ENCODE measurements at regions of chr1 and their contacts with region 1.

Region 1: DNA sequence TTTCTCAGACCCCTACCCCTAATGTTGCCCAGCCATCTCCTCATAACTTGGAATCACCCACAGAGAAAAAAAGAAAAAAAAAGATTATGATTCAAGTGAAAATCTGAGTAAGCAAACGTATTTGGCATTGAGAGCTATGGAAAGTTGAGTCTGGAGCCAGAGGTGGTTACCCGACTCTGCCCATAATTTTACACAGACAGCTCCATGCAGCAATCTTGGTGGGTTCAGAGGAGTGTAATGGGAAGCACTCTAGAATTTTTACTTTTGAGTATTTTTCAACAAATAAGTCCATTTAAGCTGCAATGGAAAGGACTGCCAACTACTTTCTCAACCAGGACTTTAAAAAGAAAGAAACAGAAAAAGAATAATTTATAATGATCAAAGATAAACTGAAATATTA is 62.7 kb downstream of the ZC3H11B start:
- DNase-seq: no peak
- ATAC-seq: no peak
- H3K4me3 ChIP-seq: no peak overlapping the region
- H3K27ac ChIP-seq: no peak overlapping the region
- H3K4me1 ChIP-seq: no peaks in the 10 kb centered on the region
- H3K27me3 ChIP-seq: no peaks in the 10 kb centered on the region; a peak in 1 of 5 replicates
- CTCF ChIP-seq: no peak
- EP300 ChIP-seq: no peak
- POLR2A ChIP-seq: no peak
- RAD21 ChIP-seq: no peak

Region 2: GRCh38 chr1:219539645-219540254 is 10.5 kb before region 1 on chr1:
- CTCF ChIA-PET with region 1: no interaction called
- POLR2A ChIA-PET with region 1: interaction called, 10 read pairs
- in situ Hi-C with region 1: no loop called
- intact Hi-C with region 1: no loop called
- DNase-seq: no peak
- ATAC-seq: no peak
- H3K4me3 ChIP-seq: no peak overlapping the region
- H3K27ac ChIP-seq: no peak overlapping the region
- H3K4me1 ChIP-seq: no peaks in the 10 kb centered on the region
- H3K27me3 ChIP-seq: no peaks in the 10 kb centered on the region; a peak in 1 of 5 replicates
- CTCF ChIP-seq: no peak
- EP300 ChIP-seq: no peak
- POLR2A ChIP-seq: no peak
- RAD21 ChIP-seq: no peak

Region 3: DNA sequence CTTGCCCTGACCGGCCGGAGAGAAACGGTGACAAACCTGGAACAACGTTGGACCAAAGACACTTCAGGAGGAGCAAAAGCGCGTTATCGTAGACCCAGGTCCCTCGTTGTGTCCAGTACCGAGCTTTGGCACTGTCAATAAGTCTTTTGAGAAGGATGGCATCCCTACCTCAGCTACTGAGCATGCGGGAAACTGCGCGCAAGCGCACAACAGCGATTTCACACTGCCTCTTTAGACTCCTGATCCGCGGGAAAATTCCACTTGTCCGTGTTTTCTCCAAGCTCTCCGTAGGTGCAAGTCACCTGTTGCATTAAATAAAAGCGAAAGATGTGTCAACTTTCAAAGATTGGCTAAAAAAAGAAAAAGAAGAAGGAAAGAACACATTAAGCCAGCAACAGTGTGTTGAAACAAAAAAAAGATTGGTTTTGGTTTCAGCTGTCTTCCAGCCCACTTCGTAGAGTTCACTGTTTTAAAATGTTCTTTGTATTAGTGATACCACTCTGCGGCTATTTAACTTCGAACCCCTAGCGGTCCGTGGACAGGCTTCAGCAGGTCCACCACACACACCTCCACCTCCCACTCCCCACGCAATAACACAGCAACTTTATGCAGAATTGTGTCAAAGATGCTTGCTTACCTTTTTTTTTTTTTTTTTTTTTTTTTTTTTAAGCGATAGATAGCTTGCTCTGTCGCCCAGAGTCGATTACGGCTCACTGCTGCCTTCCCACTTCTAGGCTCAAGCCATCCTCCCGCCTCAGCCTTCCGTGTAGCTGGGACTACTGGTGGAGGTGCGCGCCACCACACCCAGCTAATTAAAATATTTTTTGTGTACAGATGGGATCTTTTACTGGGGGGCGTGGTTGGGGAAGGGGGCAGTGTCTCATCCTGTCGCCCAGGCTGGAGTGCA is 539.7 kb after region 1 on chr1 and contains the start of gene BPNT1:
- CTCF ChIA-PET with region 1: no interaction called
- POLR2A ChIA-PET with region 1: no interaction called
- in situ Hi-C with region 1: no loop called
- intact Hi-C with region 1: no loop called
- DNase-seq: peak; percentile 90 to 98 (median 91)
- ATAC-seq: peak; percentile 79
- H3K4me3 ChIP-seq: peak within 1 kb of the TSS; percentile 50
- H3K27ac ChIP-seq: peak within 1 kb of the TSS; percentile 13; the same call in 2 of the 3 replicates
- H3K4me1 ChIP-seq: peaks cover 9 to 18% of the 10 kb centered on the region in 2 experiments; a peak in 4 of 5 replicates
- H3K27me3 ChIP-seq: no peaks in the 10 kb centered on the region
- CTCF ChIP-seq: peak in 1 of 3 experiments; percentile 30; a peak in 1 of 6 replicates
- EP300 ChIP-seq: peak; percentile 64
- POLR2A ChIP-seq: peak; percentile 75
- RAD21 ChIP-seq: no peak
- polyA plus RNA-seq, gene BPNT1: 30.2 to 52.9 TPM

Measured in K562 (cell line).